ENCODE measurements at regions of chr4 and their contacts with region 1.

Region 1: DNA sequence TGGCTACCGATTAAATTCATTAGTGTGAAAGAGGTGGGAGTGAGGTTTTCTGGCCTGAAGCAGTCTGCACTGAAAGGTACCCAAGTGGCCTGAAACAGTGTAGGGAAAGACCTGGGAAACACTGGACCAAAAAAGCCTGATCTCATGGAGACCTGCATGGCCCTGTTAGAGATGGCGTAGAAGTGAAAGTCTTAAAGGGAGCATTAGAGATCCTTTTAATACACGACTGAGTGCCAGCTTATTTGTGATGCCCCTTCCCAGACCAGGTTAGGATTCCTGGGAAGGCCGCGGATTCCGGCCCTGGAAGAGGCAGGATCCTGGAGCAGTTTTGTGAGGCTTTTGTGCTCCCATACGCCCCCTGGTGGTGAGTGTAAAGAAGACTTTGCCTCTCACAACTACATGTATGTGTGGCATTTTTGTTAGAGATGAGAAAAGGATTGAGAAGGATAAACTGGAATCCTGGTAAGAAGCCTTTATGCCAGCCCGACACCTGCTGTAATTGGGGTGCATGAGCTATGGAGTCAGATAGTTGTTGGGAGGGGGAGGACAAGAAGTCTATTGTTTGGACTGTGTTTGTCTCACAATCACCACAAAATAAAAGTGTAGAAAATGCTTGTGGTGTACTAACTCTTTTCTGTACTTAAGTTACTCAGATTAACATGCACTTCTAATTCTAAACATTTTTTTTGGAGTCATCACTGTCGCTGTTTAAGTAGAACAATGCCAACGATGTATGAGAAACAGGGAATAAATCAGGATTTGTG is 54.0 kb downstream of the JADE1 start:
- DNase-seq: peak; percentile 88
- H3K4me3 Mint-ChIP-seq: peak overlapping the region; percentile 42
- H3K27ac Mint-ChIP-seq: peak overlapping the region; percentile 86
- H3K4me1 Mint-ChIP-seq: peaks cover 44% of the 10 kb centered on the region
- H3K27me3 Mint-ChIP-seq: no peaks in the 10 kb centered on the region

Region 2: GRCh38 chr4:128354205-128354821 is 509.2 kb before region 1 on chr4:
- intact Hi-C with region 1: no loop called
- DNase-seq: no peak
- H3K4me3 Mint-ChIP-seq: no peak overlapping the region
- H3K27ac Mint-ChIP-seq: no peak overlapping the region
- H3K4me1 Mint-ChIP-seq: peaks cover 3% of the 10 kb centered on the region
- H3K27me3 Mint-ChIP-seq: no peaks in the 10 kb centered on the region

Region 3: GRCh38 chr4:128454281-128455075 is 409.0 kb before region 1 on chr4:
- intact Hi-C with region 1: loop called (anchors 1 kb)
- DNase-seq: peak; percentile 84
- H3K4me3 Mint-ChIP-seq: no peak overlapping the region
- H3K27ac Mint-ChIP-seq: no peak overlapping the region
- H3K4me1 Mint-ChIP-seq: peaks cover 7% of the 10 kb centered on the region
- H3K27me3 Mint-ChIP-seq: no peaks in the 10 kb centered on the region

Region 4: DNA sequence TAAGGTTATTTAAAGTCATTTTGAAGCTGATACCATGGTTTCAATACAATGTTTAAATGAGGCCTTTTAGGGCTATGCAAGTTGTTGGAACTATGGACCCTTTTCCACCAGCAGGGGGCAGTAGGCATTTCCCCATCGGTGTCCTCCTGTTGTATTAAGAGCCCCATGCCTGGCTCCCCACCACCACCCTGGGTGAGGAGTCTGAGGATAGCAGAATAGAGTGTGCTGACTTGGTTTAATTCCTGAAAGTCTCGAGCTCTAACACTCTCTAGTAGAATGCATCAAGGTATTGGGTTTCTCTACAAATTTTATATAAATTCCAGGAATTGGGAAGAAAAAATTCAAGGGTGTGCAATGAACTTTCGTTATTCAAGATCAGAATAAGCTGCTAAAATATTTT is 288.8 kb before region 1 on chr4:
- intact Hi-C with region 1: loop called (anchors 1 kb)
- DNase-seq: peak; percentile 89
- H3K4me3 Mint-ChIP-seq: no peak overlapping the region
- H3K27ac Mint-ChIP-seq: no peak overlapping the region
- H3K4me1 Mint-ChIP-seq: no peaks in the 10 kb centered on the region
- H3K27me3 Mint-ChIP-seq: peaks cover 3% of the 10 kb centered on the region

Region 5: DNA sequence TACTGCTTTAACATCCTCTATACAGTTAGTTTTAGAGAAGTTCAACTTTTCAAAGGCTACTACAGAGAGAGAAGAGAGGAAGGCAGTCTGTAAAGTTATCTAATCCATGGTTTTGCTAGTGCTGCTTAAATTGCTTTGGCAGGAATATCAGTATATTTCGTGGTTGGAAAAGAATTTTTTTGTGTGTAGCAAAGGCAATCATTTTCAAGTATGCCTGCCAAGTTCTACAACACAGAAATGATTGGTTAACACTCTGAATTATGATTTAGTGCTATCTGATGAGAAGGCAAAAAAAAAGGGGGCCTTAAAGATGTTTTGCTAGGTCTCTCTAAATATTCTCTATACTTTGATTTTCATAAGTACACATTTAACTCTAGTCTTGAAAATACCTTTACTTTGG is 79.1 kb after region 1 on chr4:
- intact Hi-C with region 1: no loop called
- DNase-seq: no peak
- H3K4me3 Mint-ChIP-seq: no peak overlapping the region
- H3K27ac Mint-ChIP-seq: no peak overlapping the region
- H3K4me1 Mint-ChIP-seq: no peaks in the 10 kb centered on the region
- H3K27me3 Mint-ChIP-seq: no peaks in the 10 kb centered on the region